HCT116 (cell line): ENCODE measurements at regions of chr2 and their contacts with region 1.

Region 1: DNA sequence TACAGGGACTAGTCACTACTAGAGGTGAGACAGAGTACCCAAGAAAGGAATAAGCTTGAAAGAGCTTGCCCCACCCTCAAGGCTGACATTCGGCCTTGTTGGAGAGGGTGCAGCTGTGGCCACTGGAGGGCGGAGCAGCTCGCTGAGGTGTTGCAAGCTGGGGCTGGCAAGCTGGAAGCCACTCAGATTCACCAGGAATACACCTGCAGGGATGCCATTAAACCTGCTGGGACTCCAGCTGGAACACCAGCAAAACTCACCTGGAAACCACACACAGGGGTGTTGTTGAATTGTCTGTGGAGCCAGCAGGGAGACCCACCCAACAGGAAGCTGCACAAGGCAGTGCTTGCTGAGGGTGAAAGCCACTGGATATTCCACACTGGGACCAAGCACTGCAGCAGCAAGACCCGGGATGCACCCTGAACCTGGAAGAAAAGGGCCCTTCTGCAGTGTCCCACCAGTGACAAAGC is 26.1 kb downstream of the KCTD18 start:
- DNase-seq: peak; percentile 27
- ATAC-seq: peak; percentile 80
- H3K4me3 ChIP-seq: no peak overlapping the region
- H3K27ac ChIP-seq: no peak overlapping the region
- H3K4me1 ChIP-seq: peaks cover 0 to 26% of the 10 kb centered on the region in 2 experiments; a peak in 2 of 4 replicates
- H3K27me3 ChIP-seq: no peaks in the 10 kb centered on the region
- CTCF ChIP-seq: peak; percentile 71 to 85 (median 80)
- POLR2A ChIP-seq: no peak
- RAD21 ChIP-seq: peak; percentile 83

Region 2: DNA sequence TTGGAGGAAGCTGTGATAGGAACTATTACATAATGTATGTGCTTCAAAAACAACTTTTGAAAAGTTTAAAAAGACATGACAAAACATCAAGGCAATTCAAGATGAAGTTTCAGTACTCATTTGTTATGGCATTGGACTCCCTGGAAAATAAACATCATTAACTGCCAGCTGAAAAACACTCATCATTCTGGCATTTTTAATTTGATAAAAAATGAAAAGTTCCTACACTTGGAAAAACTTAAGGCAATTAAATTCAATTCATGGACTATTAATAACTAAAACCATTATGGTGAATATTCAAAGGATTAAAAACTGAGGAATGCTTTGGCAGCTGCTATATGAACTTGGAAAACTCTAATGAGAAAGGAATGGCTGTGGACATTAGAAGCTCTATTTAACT is 536.9 kb before region 1 on chr2:
- CTCF ChIA-PET with region 1: no interaction called
- POLR2A ChIA-PET with region 1: no interaction called
- RAD21 ChIA-PET with region 1: no interaction called
- intact Hi-C with region 1: no loop called
- DNase-seq: no peak
- ATAC-seq: no peak
- H3K4me3 ChIP-seq: no peak overlapping the region
- H3K27ac ChIP-seq: no peak overlapping the region
- H3K4me1 ChIP-seq: no peaks in the 10 kb centered on the region
- H3K27me3 ChIP-seq: no peaks in the 10 kb centered on the region
- CTCF ChIP-seq: no peak
- POLR2A ChIP-seq: no peak
- RAD21 ChIP-seq: no peak

Region 3: GRCh38 chr2:199979832-199980628 is 503.7 kb before region 1 on chr2:
- CTCF ChIA-PET with region 1: interaction called, 64 read pairs
- POLR2A ChIA-PET with region 1: no interaction called
- RAD21 ChIA-PET with region 1: interaction called, 3 to 6 read pairs
- intact Hi-C with region 1: loop called (anchors 1 kb)
- DNase-seq: peak; percentile 57
- ATAC-seq: peak; percentile 79
- H3K4me3 ChIP-seq: no peak overlapping the region
- H3K27ac ChIP-seq: no peak overlapping the region
- H3K4me1 ChIP-seq: peaks cover 10 to 26% of the 10 kb centered on the region in 2 experiments
- H3K27me3 ChIP-seq: no peaks in the 10 kb centered on the region
- CTCF ChIP-seq: peak; percentile 76 to 95 (median 88)
- POLR2A ChIP-seq: no peak
- RAD21 ChIP-seq: peak; percentile 93

Region 4: DNA sequence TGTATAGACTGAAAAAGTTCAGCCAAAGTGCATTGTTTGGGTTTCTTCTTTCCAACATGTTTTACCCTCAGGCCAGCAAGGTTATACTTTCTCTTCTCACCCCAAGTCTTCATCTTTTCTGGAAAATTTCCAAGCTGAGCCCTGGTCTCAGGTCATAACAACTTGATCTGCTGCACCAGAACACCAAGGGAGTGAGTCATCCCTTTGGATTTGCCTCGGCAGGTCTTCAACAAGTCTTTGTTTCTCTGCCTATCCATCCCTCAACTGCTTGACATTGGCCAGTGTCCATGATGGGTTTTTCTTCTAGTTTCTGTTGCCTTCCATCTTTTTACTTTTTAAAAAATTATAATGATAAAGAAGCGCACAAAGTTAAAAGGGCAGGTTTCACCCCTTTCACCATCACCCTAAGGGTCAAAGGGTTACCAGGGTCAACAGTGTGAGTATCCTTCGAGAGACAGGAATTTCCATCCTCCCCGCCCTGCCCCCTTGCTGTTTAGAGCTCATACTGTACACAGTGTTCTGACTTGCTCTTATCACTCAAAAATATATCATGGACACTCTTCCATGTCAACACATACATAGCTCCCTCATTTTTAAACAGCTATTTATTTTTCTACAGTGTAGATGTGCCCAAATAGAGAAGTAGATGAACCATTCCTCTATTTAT is 183.0 kb before region 1 on chr2:
- CTCF ChIA-PET with region 1: no interaction called
- POLR2A ChIA-PET with region 1: no interaction called
- RAD21 ChIA-PET with region 1: no interaction called
- intact Hi-C with region 1: loop called (anchors 5 kb)
- DNase-seq: peak; percentile 68
- ATAC-seq: peak; percentile 67
- H3K4me3 ChIP-seq: peak overlapping the region in 1 of 2 experiments; percentile 28; a peak in 1 of 4 replicates
- H3K27ac ChIP-seq: peak overlapping the region; percentile 75; the same call in 1 of the 2 replicates
- H3K4me1 ChIP-seq: peaks cover 37 to 57% of the 10 kb centered on the region in 2 experiments
- H3K27me3 ChIP-seq: no peaks in the 10 kb centered on the region
- CTCF ChIP-seq: 0 out of 6 replicates have a peak, but pooled peaks of 2 of the 3 experiments have one; percentile 12 to 14
- POLR2A ChIP-seq: no peak
- RAD21 ChIP-seq: peak; percentile 11; the same call in 1 of the 2 replicates

Region 5: DNA sequence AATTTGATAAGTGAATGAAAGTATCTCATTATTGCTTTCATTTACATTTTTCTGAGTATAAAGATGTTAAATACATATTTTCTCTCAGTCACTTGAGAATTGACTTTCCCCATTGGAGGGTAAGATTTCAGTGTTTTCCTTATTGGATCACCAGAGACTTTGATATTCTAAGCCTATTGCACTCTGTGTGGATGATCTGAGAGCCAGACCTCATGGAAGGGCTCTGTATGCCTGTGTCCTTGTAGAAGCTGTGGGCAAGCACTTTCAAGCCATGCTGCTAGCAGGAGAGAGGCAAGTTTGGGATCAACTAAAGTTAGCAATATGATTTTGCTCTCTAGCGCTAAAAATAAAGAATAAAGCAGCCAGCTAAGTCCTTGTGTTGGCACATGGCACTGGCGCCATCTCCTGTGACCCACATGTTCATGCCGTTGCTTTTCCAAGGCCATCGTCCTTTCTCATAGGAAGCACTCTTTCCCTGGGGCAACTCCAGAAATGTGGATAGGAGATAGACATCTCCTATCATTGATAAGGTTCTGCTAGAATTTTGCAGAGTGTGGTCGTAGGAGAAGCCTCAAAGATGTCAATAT is 174.6 kb after region 1 on chr2:
- CTCF ChIA-PET with region 1: interaction called, 16 read pairs
- POLR2A ChIA-PET with region 1: no interaction called
- RAD21 ChIA-PET with region 1: interaction called in 1 of 2 experiments, 3 read pairs
- intact Hi-C with region 1: no loop called
- DNase-seq: peak; percentile 15
- ATAC-seq: peak; percentile 41
- H3K4me3 ChIP-seq: no peak overlapping the region
- H3K27ac ChIP-seq: no peak overlapping the region
- H3K4me1 ChIP-seq: peaks cover 3 to 26% of the 10 kb centered on the region in 2 experiments; a peak in 3 of 4 replicates
- H3K27me3 ChIP-seq: no peaks in the 10 kb centered on the region
- CTCF ChIP-seq: peak; percentile 16 to 36 (median 24); a peak in 2 of 6 replicates
- POLR2A ChIP-seq: no peak
- RAD21 ChIP-seq: peak; percentile 62